Caco-2 (cell line): ENCODE measurements at regions of chr22 and their contacts with region 1.

Region 1: DNA sequence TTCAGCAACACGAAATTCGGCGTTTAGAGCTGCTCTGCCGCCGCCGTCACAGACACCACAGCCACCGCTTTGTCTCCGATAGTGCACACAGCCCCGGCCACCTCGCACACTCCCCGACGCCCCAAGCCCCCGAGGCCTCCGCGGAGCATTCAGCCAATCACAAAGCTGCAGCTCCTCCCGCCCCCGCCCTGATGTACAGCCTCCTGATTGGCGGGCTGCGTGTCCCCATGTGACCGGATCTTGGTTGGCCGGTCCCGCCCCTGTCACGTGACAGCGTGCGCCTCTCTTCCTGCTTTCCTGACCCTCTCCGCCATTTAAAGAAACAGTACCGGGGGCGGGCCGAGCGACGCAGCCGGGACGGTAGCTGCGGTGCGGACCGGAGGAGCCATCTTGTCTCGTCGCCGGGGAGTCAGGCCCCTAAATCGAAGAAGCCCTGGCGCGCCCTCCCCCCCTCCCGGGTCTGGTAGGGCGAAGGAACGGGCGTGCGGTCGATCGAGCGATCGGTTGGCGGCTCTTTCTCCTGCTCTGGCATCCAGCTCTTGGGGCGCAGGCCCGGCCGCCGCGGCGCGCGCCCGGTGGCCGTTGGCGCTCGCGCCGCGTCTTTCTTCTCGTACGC is at the start of gene TUG1:
- DNase-seq: peak; percentile 98
- H3K4me3 ChIP-seq: peak within 1 kb of the TSS; percentile 57
- H3K4me3 Mint-ChIP-seq: peak within 1 kb of the TSS; percentile 96
- H3K27ac Mint-ChIP-seq: peak within 1 kb of the TSS; percentile 98
- H3K4me1 ChIP-seq: peaks cover 20% of the 10 kb centered on the region
- H3K4me1 Mint-ChIP-seq: no peaks in the 10 kb centered on the region
- H3K27me3 ChIP-seq: no peaks in the 10 kb centered on the region
- H3K27me3 Mint-ChIP-seq: no peaks in the 10 kb centered on the region
- CTCF ChIP-seq: no peak
- total RNA-seq, gene TUG1: 99.1 and 103 TPM in 2 replicates

Region 2: GRCh38 chr22:30890686-30891442 is 78.2 kb before region 1 on chr22:
- CTCF ChIA-PET with region 1: no interaction called
- POLR2A ChIA-PET with region 1: no interaction called
- intact Hi-C with region 1: no loop called
- DNase-seq: peak in 1 of 2 experiments; percentile 64
- H3K4me3 ChIP-seq: no peak overlapping the region
- H3K4me3 Mint-ChIP-seq: no peak overlapping the region
- H3K27ac Mint-ChIP-seq: no peak overlapping the region
- H3K4me1 ChIP-seq: no peaks in the 10 kb centered on the region
- H3K4me1 Mint-ChIP-seq: no peaks in the 10 kb centered on the region
- H3K27me3 ChIP-seq: no peaks in the 10 kb centered on the region
- H3K27me3 Mint-ChIP-seq: no peaks in the 10 kb centered on the region
- CTCF ChIP-seq: peak; percentile 69 to 84

Region 3: DNA sequence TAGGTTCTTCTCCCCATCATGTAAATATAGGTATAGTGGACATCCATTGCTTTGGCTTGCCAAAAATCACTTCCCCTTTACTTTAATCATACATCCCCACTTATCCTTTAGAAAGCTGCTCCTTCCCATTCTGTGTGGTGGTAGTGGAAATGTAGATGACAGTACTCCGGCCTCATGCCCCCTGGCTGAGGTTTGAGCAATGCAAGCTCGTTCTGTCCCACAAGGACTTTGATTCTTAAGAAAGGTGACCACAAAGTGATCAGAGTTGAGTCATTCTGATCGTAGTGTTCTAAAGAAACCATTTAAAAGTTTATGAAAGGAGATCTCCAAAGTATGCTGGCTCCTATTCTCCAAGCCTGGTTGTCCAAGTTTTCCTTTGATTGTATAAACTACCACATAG is 10.9 kb after region 1 on chr22:
- CTCF ChIA-PET with region 1: no interaction called
- POLR2A ChIA-PET with region 1: interaction called, 10 read pairs
- intact Hi-C with region 1: no loop called
- DNase-seq: no peak
- H3K4me3 ChIP-seq: no peak overlapping the region
- H3K4me3 Mint-ChIP-seq: no peak overlapping the region
- H3K27ac Mint-ChIP-seq: no peak overlapping the region
- H3K4me1 ChIP-seq: peaks cover 8% of the 10 kb centered on the region
- H3K4me1 Mint-ChIP-seq: peaks cover 12% of the 10 kb centered on the region
- H3K27me3 ChIP-seq: no peaks in the 10 kb centered on the region
- H3K27me3 Mint-ChIP-seq: no peaks in the 10 kb centered on the region
- CTCF ChIP-seq: no peak

Region 4: DNA sequence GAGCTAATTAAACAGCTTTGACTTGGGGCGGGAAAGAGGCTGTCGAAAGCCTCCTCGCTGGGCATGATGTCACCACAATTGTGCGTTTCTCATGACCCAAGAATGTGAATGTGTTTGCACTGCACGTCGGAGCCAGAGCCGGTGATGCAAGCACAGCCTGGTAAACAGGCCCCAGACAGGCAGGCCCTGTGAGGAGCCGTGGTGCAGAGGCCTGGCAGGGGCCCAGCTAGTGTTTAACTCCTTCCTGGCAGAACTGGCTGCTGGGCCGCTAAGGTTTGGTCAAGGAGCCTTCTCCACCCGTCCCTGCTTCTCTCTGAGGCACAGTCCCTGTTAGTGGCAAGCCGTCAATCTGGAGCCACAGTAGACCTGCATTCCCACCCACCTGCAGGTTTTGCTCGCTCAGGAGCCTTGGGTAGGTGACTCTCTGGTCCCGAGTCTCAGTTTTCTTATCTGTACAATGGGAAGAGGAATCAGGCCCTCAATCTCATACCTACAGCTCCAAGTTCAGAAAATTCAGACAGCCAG is 86.7 kb after region 1 on chr22:
- CTCF ChIA-PET with region 1: no interaction called
- POLR2A ChIA-PET with region 1: interaction called, 24 read pairs
- intact Hi-C with region 1: loop called (anchors 1 kb)
- DNase-seq: peak; percentile 93 to 96
- H3K4me3 ChIP-seq: no peak overlapping the region
- H3K4me3 Mint-ChIP-seq: peak overlapping the region; percentile 42
- H3K27ac Mint-ChIP-seq: peak overlapping the region; percentile 91
- H3K4me1 ChIP-seq: peaks cover 26% of the 10 kb centered on the region
- H3K4me1 Mint-ChIP-seq: peaks cover 11% of the 10 kb centered on the region
- H3K27me3 ChIP-seq: no peaks in the 10 kb centered on the region
- H3K27me3 Mint-ChIP-seq: no peaks in the 10 kb centered on the region
- CTCF ChIP-seq: no peak

Region 5: GRCh38 chr22:31080848-31081649 is 112.0 kb after region 1 on chr22 and contains the start of gene SMTN:
- CTCF ChIA-PET with region 1: interaction called, 12 read pairs
- POLR2A ChIA-PET with region 1: interaction called, 60 read pairs
- intact Hi-C with region 1: loop called (anchors 1 kb)
- DNase-seq: peak; percentile 93 to 96
- H3K4me3 ChIP-seq: peak within 1 kb of the TSS; percentile 60
- H3K4me3 Mint-ChIP-seq: peak within 1 kb of the TSS; percentile 94
- H3K27ac Mint-ChIP-seq: peak within 1 kb of the TSS; percentile 95
- H3K4me1 ChIP-seq: peaks cover 38% of the 10 kb centered on the region
- H3K4me1 Mint-ChIP-seq: peaks cover 30% of the 10 kb centered on the region
- H3K27me3 ChIP-seq: no peaks in the 10 kb centered on the region
- H3K27me3 Mint-ChIP-seq: no peaks in the 10 kb centered on the region
- CTCF ChIP-seq: no peak
- total RNA-seq, gene SMTN: 69.8 and 71.0 TPM in 2 replicates